ENCODE measurements at regions of chr11 and their contacts with region 1.

Region 1: DNA sequence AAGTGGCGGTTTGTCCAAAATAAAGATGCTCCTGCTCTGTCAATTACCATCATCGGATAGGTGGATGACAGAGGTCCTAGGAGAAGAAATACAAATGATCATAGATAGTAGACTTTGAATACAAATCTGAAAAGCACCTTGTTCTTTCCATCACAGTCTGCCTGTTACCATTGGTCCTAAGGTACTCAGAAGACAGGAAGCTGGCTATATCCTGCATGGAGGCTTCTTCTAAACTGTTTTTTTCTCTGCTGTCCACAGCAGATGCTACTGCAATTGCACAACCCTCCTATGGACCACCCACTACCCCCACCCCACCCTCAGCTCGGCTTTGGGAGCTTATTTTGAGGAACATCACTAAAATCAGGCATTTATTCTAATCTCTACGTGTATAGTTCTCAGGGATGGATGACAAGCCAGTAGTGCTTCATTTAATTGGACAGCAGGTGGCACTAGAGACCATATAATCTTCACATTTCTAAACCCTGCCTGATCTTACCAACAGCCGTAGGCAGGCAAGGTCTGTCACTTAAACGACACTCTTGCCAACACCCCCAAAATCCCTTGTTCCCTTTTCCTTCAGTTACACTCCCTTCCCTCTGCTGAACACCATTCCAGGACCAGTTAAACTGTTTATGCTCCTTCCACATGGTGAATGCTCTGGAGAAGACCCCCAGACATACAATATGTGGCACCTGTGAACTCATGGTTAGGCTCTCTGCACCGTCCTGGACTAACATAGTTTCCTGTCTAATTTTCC is 6.6 kb upstream of the PTS start:
- DNase-seq: peak; percentile 81
- ATAC-seq: peak; percentile 84
- H3K4me3 ChIP-seq: no peak overlapping the region
- H3K27ac ChIP-seq: no peak overlapping the region
- H3K4me1 ChIP-seq: peaks cover 19% of the 10 kb centered on the region
- H3K27me3 ChIP-seq: no peaks in the 10 kb centered on the region
- CTCF ChIP-seq: peak; percentile 90
- POLR2A ChIP-seq: no peak
- RAD21 ChIP-seq: peak; percentile 92

Region 2: DNA sequence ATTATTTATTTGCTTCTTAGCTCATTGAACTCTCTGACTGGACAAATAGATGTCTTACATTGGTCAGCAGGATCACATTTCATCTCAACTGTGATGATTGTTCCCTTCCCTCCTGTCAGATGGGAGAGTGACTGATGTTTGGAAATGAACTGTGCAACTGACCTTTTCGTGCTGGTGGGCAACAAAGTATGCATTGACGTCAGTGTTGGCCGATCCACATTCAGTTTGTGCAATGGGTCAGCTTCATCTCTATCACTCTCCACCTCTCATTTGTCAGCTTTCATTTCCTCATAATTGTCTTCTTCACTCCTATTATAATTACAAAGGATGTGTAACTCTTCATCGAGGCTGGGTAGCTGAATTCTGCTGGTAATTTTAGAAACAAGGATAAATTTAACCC is 524.8 kb before region 1 on chr11:
- CTCF ChIA-PET with region 1: no interaction called
- POLR2A ChIA-PET with region 1: no interaction called
- dilution Hi-C with region 1: no loop called
- in situ Hi-C with region 1: no loop called
- intact Hi-C with region 1: no loop called
- DNase-seq: peak; percentile 99
- ATAC-seq: peak; percentile 78
- H3K4me3 ChIP-seq: no peak overlapping the region
- H3K27ac ChIP-seq: no peak overlapping the region
- H3K4me1 ChIP-seq: peaks cover 17% of the 10 kb centered on the region
- H3K27me3 ChIP-seq: no peaks in the 10 kb centered on the region
- CTCF ChIP-seq: no peak
- POLR2A ChIP-seq: no peak
- RAD21 ChIP-seq: no peak

Region 3: GRCh38 chr11:112113539-112114457 is 105.9 kb before region 1 on chr11:
- CTCF ChIA-PET with region 1: interaction called, 7 read pairs
- POLR2A ChIA-PET with region 1: no interaction called
- dilution Hi-C with region 1: no loop called
- in situ Hi-C with region 1: no loop called
- intact Hi-C with region 1: loop called (anchors 2 kb)
- DNase-seq: peak; percentile 69
- ATAC-seq: peak; percentile 84
- H3K4me3 ChIP-seq: no peak overlapping the region
- H3K27ac ChIP-seq: no peak overlapping the region
- H3K4me1 ChIP-seq: no peaks in the 10 kb centered on the region
- H3K27me3 ChIP-seq: no peaks in the 10 kb centered on the region
- CTCF ChIP-seq: peak; percentile 69
- POLR2A ChIP-seq: no peak
- RAD21 ChIP-seq: peak; percentile 75

Region 4: GRCh38 chr11:112364962-112365481 is 145.4 kb after region 1 on chr11:
- CTCF ChIA-PET with region 1: no interaction called
- POLR2A ChIA-PET with region 1: no interaction called
- dilution Hi-C with region 1: no loop called
- in situ Hi-C with region 1: loop called (anchors 10 kb)
- intact Hi-C with region 1: loop called (anchors 5 kb)
- DNase-seq: peak; percentile 99
- ATAC-seq: peak; percentile 89
- H3K4me3 ChIP-seq: no peak overlapping the region
- H3K27ac ChIP-seq: peak overlapping the region; percentile 98
- H3K4me1 ChIP-seq: peaks cover 31% of the 10 kb centered on the region
- H3K27me3 ChIP-seq: no peaks in the 10 kb centered on the region
- CTCF ChIP-seq: no peak
- POLR2A ChIP-seq: 0 out of 2 replicates have a peak, but pooled peaks have one; percentile 26
- RAD21 ChIP-seq: no peak

Region 5: DNA sequence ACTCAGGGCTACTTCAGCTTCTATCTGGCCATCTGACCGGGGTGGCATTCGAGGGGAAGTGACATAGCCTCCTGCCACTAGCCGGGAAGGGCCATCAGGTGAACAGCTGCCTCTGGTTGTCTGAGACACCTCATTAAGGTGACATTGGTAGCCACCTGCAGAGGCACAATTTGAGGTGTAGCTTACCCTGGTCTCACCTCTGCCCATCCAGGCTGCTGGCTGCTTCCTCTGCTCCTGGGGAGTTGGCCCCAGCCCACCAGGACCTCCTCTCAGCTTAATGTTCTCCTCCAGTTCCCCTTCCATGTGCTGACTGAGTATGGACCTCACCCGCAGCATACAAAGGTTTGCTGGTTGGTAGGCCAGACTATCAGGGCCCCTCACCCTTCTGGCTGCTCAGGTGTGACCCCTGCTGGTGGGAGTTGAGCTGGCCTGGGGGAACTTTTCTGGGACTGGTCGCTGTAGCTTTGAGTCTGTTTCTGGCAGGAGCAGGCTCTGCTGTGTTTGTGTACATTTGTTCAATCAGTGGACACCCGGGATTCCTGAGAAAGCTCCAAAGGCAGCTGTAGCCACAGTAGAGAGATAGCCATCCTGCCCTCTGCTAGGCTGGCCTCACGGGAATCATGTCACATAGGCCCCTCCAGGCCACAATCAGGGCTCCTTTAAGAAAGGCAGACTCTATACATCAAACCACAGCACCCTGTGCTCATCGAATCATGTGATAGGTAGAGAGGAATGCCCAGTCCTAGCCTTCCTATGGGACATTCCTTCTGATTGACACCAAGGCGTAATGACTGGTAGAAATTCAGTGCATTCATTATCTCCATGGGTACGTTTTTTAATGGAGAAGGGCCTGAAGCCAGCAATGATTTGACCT is 336.1 kb after region 1 on chr11:
- CTCF ChIA-PET with region 1: no interaction called
- POLR2A ChIA-PET with region 1: no interaction called
- dilution Hi-C with region 1: no loop called
- in situ Hi-C with region 1: no loop called
- intact Hi-C with region 1: loop called (anchors 10 kb)
- DNase-seq: peak; percentile 35
- ATAC-seq: peak; percentile 86
- H3K4me3 ChIP-seq: no peak overlapping the region
- H3K27ac ChIP-seq: no peak overlapping the region
- H3K4me1 ChIP-seq: no peaks in the 10 kb centered on the region
- H3K27me3 ChIP-seq: peaks cover 10% of the 10 kb centered on the region
- CTCF ChIP-seq: peak; percentile 70
- POLR2A ChIP-seq: no peak
- RAD21 ChIP-seq: peak; percentile 64

Region 6: DNA sequence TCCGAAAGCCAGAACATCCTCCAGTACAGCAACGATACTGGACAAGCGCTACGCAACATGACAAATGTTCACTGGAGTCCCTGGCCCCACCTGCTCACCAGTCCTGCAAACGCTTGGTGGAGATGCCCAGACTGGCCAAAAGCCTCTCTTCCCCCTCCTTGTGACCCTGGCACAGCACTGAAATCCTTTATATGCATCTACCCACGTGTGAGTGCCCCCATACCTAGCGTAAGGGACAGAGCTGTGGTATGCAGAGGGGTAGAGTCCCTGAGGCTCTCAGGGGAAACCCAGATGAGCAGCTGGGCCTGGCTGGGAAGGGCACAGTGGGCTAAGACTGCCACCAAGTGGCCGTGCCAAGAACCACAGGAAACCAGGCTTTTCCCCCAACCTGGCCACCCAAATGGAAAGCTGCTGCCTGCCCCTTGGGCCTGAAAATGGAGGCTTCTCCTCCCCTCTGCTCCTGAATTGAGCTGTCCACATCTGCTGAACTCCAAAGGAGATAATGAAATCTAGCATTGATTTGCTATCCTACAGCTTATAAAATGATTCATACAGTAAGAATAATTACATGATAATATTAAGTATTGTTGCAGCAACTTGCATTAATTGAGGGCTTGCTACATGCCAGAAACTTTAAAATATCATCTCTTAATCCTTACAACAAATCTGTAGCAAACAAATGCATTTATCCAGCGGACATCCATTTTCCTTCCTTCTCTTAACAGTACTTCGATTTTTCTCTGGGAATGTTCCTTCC is 1070.0 kb after region 1 on chr11:
- CTCF ChIA-PET with region 1: interaction called, 3 read pairs
- POLR2A ChIA-PET with region 1: no interaction called
- dilution Hi-C with region 1: no loop called
- in situ Hi-C with region 1: loop called (anchors 10 kb)
- intact Hi-C with region 1: loop called (anchors 1 kb)
- DNase-seq: peak; percentile 38
- ATAC-seq: peak; percentile 91
- H3K4me3 ChIP-seq: no peak overlapping the region
- H3K27ac ChIP-seq: no peak overlapping the region
- H3K4me1 ChIP-seq: peaks cover 6% of the 10 kb centered on the region; the same call in 1 of the 2 replicates
- H3K27me3 ChIP-seq: peaks cover 8% of the 10 kb centered on the region; the same call in 1 of the 2 replicates
- CTCF ChIP-seq: peak; percentile 89
- POLR2A ChIP-seq: no peak
- RAD21 ChIP-seq: peak; percentile 92

Region 7: GRCh38 chr11:113532697-113533424 is 1313.2 kb after region 1 on chr11:
- CTCF ChIA-PET with region 1: no interaction called
- POLR2A ChIA-PET with region 1: no interaction called
- dilution Hi-C with region 1: no loop called
- in situ Hi-C with region 1: loop called (anchors 25 kb)
- intact Hi-C with region 1: loop called (anchors 10 kb)
- DNase-seq: peak; percentile 71
- ATAC-seq: peak; percentile 98
- H3K4me3 ChIP-seq: no peak overlapping the region
- H3K27ac ChIP-seq: no peak overlapping the region
- H3K4me1 ChIP-seq: no peaks in the 10 kb centered on the region
- H3K27me3 ChIP-seq: peaks cover 28% of the 10 kb centered on the region
- CTCF ChIP-seq: peak; percentile 86
- POLR2A ChIP-seq: no peak
- RAD21 ChIP-seq: peak; percentile 81

Region 8: GRCh38 chr11:113730887-113731726 is 1511.5 kb after region 1 on chr11:
- CTCF ChIA-PET with region 1: no interaction called
- POLR2A ChIA-PET with region 1: no interaction called
- dilution Hi-C with region 1: no loop called
- in situ Hi-C with region 1: no loop called
- intact Hi-C with region 1: loop called (anchors 10 kb)
- DNase-seq: peak; percentile 64
- ATAC-seq: peak; percentile 84
- H3K4me3 ChIP-seq: no peak overlapping the region
- H3K27ac ChIP-seq: no peak overlapping the region
- H3K4me1 ChIP-seq: peaks cover 4% of the 10 kb centered on the region; the same call in 1 of the 2 replicates
- H3K27me3 ChIP-seq: no peaks in the 10 kb centered on the region
- CTCF ChIP-seq: peak; percentile 66
- POLR2A ChIP-seq: no peak
- RAD21 ChIP-seq: peak; percentile 79

Measured in IMR-90 (cell line).